ENCODE measurements at regions of chr17 and their contacts with region 1.

Region 1: GRCh38 chr17:35531160-35531559 is 6.3 kb downstream of the SLFN12L start:
- DNase-seq: no peak
- ATAC-seq: no peak
- H3K4me3 ChIP-seq: no peak overlapping the region
- H3K27ac ChIP-seq: no peak overlapping the region
- H3K4me1 ChIP-seq: no peaks in the 10 kb centered on the region
- CTCF ChIP-seq: no peak
- EP300 ChIP-seq: no peak
- POLR2A ChIP-seq: no peak
- RAD21 ChIP-seq: no peak

Region 2: GRCh38 chr17:35141681-35142466 is 389.3 kb before region 1 on chr17 and contains the start of gene NLE1:
- CTCF ChIA-PET with region 1: interaction called, 12 read pairs
- POLR2A ChIA-PET with region 1: no interaction called
- DNase-seq: peak; percentile 86 to 93
- ATAC-seq: peak; percentile 96 to 97
- H3K4me3 ChIP-seq: peak within 1 kb of the TSS; percentile 87
- H3K27ac ChIP-seq: peak within 1 kb of the TSS; percentile 84 to 93
- H3K4me1 ChIP-seq: peaks cover 9% of the 10 kb centered on the region; the same call in 2 of the 3 replicates
- CTCF ChIP-seq: peak; percentile 90
- EP300 ChIP-seq: no peak
- POLR2A ChIP-seq: peak; percentile 87
- RAD21 ChIP-seq: peak; percentile 30 to 48
- polyA plus RNA-seq, gene NLE1: 19.3 and 20.9 TPM in 2 replicates

Region 3: DNA sequence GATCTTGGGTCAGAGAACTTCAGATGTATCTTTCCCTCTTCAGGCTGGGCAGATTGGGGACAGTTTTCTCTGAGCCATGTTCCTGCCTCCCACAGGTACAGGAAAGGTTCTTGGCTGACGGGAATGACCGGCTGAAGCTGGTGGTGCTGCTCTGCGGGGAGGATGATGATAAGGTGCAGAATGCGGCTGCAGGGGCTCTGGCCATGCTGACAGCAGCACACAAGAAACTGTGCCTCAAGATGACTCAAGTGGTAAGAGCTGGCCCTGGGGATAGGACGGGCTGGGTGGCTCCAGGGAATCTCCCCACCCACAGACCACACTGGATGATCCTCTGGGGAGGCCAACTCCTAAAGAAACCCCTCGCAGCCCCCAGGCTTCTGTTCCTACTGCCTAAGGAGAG is 347.8 kb before region 1 on chr17:
- CTCF ChIA-PET with region 1: interaction called, 22 read pairs
- POLR2A ChIA-PET with region 1: no interaction called
- DNase-seq: no peak
- ATAC-seq: peak in 1 of 2 experiments; percentile 25; a peak in 2 of 6 replicates
- H3K4me3 ChIP-seq: no peak overlapping the region
- H3K27ac ChIP-seq: no peak overlapping the region
- H3K4me1 ChIP-seq: no peaks in the 10 kb centered on the region
- CTCF ChIP-seq: no peak
- EP300 ChIP-seq: no peak
- POLR2A ChIP-seq: no peak
- RAD21 ChIP-seq: no peak

Region 4: GRCh38 chr17:35242805-35243560 is 288.2 kb before region 1 on chr17 and contains the start of gene SLFN5:
- CTCF ChIA-PET with region 1: interaction called, 30 read pairs
- POLR2A ChIA-PET with region 1: no interaction called
- DNase-seq: peak; percentile 91 to 98
- ATAC-seq: peak; percentile 83 to 96
- H3K4me3 ChIP-seq: peak within 1 kb of the TSS; percentile 82
- H3K27ac ChIP-seq: peak within 1 kb of the TSS; percentile 88
- H3K4me1 ChIP-seq: peaks cover 40% of the 10 kb centered on the region
- CTCF ChIP-seq: no peak
- EP300 ChIP-seq: no peak
- POLR2A ChIP-seq: peak; percentile 91
- RAD21 ChIP-seq: no peak; a peak in 2 of 5 replicates
- polyA plus RNA-seq, gene SLFN5: 30.3 and 33.1 TPM in 2 replicates

Region 5: DNA sequence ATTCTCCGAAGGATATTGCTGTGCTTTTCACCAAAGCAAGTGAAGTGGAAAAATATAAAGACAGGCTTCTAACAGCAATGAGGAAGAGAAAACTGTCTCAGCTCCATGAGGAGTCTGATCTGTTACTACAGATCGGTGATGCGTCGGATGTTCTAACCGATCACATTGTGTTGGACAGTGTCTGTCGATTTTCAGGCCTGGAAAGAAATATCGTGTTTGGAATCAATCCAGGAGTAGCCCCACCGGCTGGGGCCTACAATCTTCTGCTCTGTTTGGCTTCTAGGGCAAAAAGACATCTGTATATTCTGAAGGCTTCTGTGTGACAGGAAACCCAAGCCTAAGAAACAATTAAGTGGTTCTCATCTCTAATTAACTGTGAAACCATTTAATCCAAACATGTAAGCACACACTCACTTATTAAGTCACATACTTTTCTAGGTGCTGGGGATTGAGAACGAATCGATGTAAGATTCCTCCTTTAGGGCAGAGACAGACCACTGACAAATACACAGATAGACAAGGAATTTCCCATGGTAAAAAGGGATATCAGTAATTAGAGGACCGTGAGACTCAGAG is 265.5 kb before region 1 on chr17:
- CTCF ChIA-PET with region 1: interaction called, 20 read pairs
- POLR2A ChIA-PET with region 1: no interaction called
- DNase-seq: no peak
- ATAC-seq: no peak
- H3K4me3 ChIP-seq: no peak overlapping the region
- H3K27ac ChIP-seq: no peak overlapping the region
- H3K4me1 ChIP-seq: no peaks in the 10 kb centered on the region
- CTCF ChIP-seq: no peak
- EP300 ChIP-seq: no peak
- POLR2A ChIP-seq: no peak
- RAD21 ChIP-seq: no peak

Region 6: GRCh38 chr17:35521150-35521549 is 10.0 kb before region 1 on chr17:
- CTCF ChIA-PET with region 1: interaction called, 23 read pairs
- POLR2A ChIA-PET with region 1: no interaction called
- DNase-seq: no peak
- ATAC-seq: no peak
- H3K4me3 ChIP-seq: no peak overlapping the region
- H3K27ac ChIP-seq: no peak overlapping the region
- H3K4me1 ChIP-seq: no peaks in the 10 kb centered on the region
- CTCF ChIP-seq: no peak
- EP300 ChIP-seq: no peak
- POLR2A ChIP-seq: no peak
- RAD21 ChIP-seq: no peak

Region 7: DNA sequence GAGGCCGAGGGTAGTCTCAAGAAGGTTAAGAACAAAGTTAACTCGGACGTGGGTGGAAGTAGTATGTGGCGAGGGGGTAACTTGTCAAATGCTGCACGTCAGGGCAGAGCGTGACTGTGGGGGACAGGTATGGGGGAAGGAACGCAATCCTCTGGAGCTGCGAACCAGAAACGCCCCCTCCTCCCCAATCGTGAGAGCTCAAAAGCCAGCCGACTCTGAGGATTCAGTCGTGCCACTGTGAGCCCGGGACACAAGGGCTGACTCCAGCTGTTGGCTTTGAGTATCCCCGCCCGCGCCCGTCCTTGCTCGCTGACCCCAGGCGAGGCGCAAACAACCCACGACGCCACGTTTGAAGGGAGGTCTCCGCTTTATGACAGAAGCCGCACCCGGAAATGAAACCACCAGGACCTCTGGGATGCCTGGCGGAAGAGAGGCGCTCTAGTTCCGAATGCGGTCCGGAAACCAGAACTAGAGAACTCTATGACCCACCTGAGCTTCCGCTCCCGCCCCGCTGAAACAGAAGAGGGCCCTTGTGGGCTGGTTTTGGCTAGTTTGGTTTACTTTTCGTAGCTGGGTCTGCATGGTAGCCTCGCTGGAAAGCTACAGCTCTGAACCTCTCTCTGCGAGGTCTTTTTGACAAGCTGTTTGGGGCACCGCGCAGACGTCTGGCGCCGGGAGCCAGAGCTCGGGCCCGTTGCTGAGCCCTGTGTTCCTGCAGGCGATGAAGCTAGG is 47.2 kb after region 1 on chr17 and contains the start of gene PEX12:
- CTCF ChIA-PET with region 1: no interaction called
- POLR2A ChIA-PET with region 1: no interaction called
- DNase-seq: peak; percentile 89 to 93
- ATAC-seq: peak; percentile 98 to 99
- H3K4me3 ChIP-seq: peak within 1 kb of the TSS; percentile 67
- H3K27ac ChIP-seq: peak within 1 kb of the TSS; percentile 83 to 90
- H3K4me1 ChIP-seq: peaks cover 16% of the 10 kb centered on the region; the same call in 2 of the 3 replicates
- CTCF ChIP-seq: no peak
- EP300 ChIP-seq: no peak
- POLR2A ChIP-seq: peak; percentile 78
- RAD21 ChIP-seq: no peak
- polyA plus RNA-seq, gene PEX12: 11.2 and 15.0 TPM in 2 replicates

Region 8: GRCh38 chr17:35605678-35606077 is 74.5 kb after region 1 on chr17:
- CTCF ChIA-PET with region 1: no interaction called
- POLR2A ChIA-PET with region 1: no interaction called
- DNase-seq: no peak
- ATAC-seq: peak; percentile 44 to 64; a peak in 5 of 6 replicates
- H3K4me3 ChIP-seq: no peak overlapping the region
- H3K27ac ChIP-seq: no peak overlapping the region
- H3K4me1 ChIP-seq: no peaks in the 10 kb centered on the region
- CTCF ChIP-seq: no peak
- EP300 ChIP-seq: no peak
- POLR2A ChIP-seq: no peak
- RAD21 ChIP-seq: no peak

Region 9: DNA sequence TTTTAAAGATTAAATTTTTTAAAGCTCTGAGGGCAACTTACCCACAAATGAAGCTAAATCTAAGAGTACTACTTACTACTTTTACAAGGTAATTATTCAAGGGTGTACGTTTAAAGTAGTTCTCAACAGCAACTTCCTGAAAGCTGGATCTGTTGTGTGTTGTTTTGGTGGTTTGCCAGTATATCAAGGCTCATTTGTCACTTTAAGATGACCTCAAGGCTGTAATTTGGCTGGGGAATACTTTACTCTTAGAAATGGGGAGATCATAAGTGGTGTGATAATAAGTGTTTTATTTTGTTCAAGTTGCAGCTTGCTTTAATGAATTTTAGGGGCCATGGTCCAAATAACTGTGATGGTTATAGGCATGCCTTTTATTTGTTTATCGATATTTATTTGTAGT is 86.3 kb after region 1 on chr17:
- CTCF ChIA-PET with region 1: no interaction called
- POLR2A ChIA-PET with region 1: no interaction called
- DNase-seq: no peak
- ATAC-seq: no peak
- H3K4me3 ChIP-seq: no peak overlapping the region
- H3K27ac ChIP-seq: no peak overlapping the region
- H3K4me1 ChIP-seq: peaks cover 6% of the 10 kb centered on the region; the same call in 2 of the 3 replicates
- CTCF ChIP-seq: no peak
- EP300 ChIP-seq: no peak
- POLR2A ChIP-seq: no peak
- RAD21 ChIP-seq: no peak

Measured in A549 (cell line).